Heart left ventricle (tissue), 16 donors: ENCODE measurements at regions of chr19 and their contacts with region 1.

Region 1: DNA sequence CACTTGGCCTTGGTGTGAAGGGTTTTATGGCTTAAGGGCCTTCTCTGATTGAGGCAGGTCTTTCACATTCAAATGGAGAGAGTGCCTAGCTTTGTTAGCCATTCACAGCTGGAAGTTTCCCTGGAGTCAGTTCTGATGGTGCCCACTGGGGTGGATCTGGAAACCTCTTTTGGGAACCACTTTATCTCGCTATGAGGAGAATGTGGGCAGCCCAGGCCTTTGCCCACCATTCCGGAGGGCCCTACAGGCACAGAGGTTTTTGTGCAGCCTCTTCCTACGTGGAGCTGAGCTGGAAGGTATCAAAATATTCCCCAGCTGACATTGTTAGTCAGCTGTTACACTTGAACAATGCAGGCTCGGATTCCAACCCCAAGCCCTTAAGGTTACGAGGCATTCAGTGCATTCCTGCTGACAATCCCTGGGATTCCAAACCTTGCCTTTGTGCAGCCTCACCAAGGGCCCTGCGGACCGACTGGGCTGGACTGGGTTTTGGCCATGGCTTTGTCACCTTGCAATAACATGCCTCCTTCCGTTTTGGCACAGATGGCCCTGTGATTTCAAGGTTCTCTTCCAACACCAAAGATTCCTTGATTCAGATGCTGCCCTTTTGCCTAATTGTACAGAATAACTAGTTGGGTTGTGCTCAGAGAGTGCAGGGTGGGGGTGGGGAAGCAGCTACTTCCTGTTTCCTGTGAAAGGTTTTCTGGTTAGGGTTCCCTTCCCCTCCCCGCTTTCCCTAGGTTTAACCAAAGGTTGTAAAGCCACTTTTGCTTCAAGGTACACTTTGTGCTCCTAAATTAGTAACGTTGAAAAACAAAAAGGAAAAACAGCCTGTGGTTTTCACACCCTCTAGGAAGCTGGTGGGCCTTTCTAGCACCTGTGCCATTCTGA is 27.0 kb downstream of the SAE1 start:
- DNase-seq: peak; percentile 59 to 73 (median 66)
- ATAC-seq: peak; percentile 54 to 79 (median 74)
- H3K4me3 ChIP-seq: peak overlapping the region in 4 of 12 donors; percentile 1 to 29 (median 5)
- H3K27ac ChIP-seq: peak overlapping the region; percentile 67 to 92 (median 86)
- H3K4me1 ChIP-seq: peaks cover 20 to 59% (median 43%) of the 10 kb centered on the region in 12 donors
- H3K27me3 ChIP-seq: no peaks in the 10 kb centered on the region
- CTCF ChIP-seq: peak in 1 of 12 donors; percentile 18
- POLR2A ChIP-seq: no peak

Region 2: DNA sequence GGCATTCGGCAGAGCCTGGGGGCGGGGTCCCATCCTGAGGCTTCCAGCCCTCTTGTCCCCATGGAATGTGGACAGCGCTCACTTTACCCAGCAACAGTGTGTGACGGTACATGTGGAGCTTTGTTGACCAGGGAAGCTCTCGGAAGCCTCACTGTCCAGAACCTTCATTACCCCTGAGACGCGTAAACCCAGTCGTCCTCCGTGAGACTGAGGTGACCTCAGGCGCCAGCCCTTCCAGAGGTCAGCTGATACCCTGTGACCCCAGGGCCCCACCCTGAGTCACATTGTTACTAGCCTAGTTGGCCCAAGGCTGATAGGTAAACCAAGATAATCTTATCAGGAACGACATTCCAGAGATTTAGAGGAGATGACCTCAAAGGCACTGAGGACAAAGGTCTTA is 99.1 kb before region 1 on chr19:
- intact Hi-C with region 1: no loop called
- DNase-seq: peak in 1 of 5 donors; percentile 4
- ATAC-seq: no peak
- H3K4me3 ChIP-seq: no peak overlapping the region
- H3K27ac ChIP-seq: no peak overlapping the region
- H3K4me1 ChIP-seq: no peaks in the 10 kb centered on the region
- H3K27me3 ChIP-seq: no peaks in the 10 kb centered on the region
- CTCF ChIP-seq: no peak
- POLR2A ChIP-seq: no peak

Region 3: GRCh38 chr19:47190167-47190727 is 32.6 kb after region 1 on chr19:
- intact Hi-C with region 1: loop called in 2 of 10 experiments (anchors 5 kb)
- DNase-seq: peak in 4 of 5 donors; percentile 26 to 58 (median 38)
- ATAC-seq: peak in 3 of 4 donors; percentile 46 to 72 (median 50)
- H3K4me3 ChIP-seq: peak overlapping the region in 2 of 12 donors; percentile 5 to 10
- H3K27ac ChIP-seq: peak overlapping the region; percentile 15 to 76 (median 62)
- H3K4me1 ChIP-seq: peaks cover 0 to 36% (median 16%) of the 10 kb centered on the region in 12 donors
- H3K27me3 ChIP-seq: no peaks in the 10 kb centered on the region
- CTCF ChIP-seq: no peak
- POLR2A ChIP-seq: no peak

Region 4: DNA sequence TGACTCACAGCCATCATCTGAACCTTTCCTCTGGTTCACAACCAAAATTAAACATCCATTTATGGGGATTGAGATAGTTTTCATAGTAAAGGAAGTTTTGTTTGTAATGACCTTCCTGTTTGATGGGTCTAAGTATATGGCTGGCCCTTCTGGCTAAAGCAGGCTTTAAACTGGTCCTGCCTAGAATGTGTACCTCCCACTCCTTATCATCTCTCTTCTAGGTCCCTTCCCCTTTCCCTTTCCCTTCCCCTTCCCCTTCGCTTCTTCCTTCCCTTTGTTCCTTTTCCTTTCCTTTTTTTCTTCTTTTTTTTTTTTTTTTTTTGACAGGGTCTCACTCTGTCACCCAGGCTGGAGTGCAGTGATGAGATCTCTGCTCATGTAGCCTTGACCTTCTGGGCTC is 37.8 kb after region 1 on chr19:
- intact Hi-C with region 1: loop called in 4 of 10 experiments (anchors 5 to 10 kb)
- DNase-seq: no peak
- ATAC-seq: no peak
- H3K4me3 ChIP-seq: no peak overlapping the region
- H3K27ac ChIP-seq: no peak overlapping the region
- H3K4me1 ChIP-seq: peaks cover 0 to 11% (median 6%) of the 10 kb centered on the region in 12 donors
- H3K27me3 ChIP-seq: no peaks in the 10 kb centered on the region
- CTCF ChIP-seq: no peak
- POLR2A ChIP-seq: no peak

Region 5: GRCh38 chr19:47210689-47211316 is 53.1 kb after region 1 on chr19:
- intact Hi-C with region 1: loop called in 8 of 10 experiments (anchors 5 to 10 kb)
- DNase-seq: peak; percentile 65 to 81 (median 75)
- ATAC-seq: peak; percentile 30 to 72 (median 64)
- H3K4me3 ChIP-seq: no peak overlapping the region
- H3K27ac ChIP-seq: peak overlapping the region in 11 of 12 donors; percentile 24 to 72 (median 53)
- H3K4me1 ChIP-seq: peaks cover 0 to 24% (median 10%) of the 10 kb centered on the region in 12 donors
- H3K27me3 ChIP-seq: no peaks in the 10 kb centered on the region
- CTCF ChIP-seq: peak; percentile 68 to 91 (median 82)
- POLR2A ChIP-seq: no peak

Region 6: GRCh38 chr19:47225746-47226425 is 68.2 kb after region 1 on chr19:
- intact Hi-C with region 1: loop called in 1 of 10 experiments (anchors 5 kb)
- DNase-seq: peak; percentile 89 to 94 (median 92)
- ATAC-seq: peak; percentile 19 to 78 (median 68)
- H3K4me3 ChIP-seq: peak overlapping the region; percentile 38 to 99 (median 88)
- H3K27ac ChIP-seq: peak overlapping the region; percentile 97 to 100 (median 100)
- H3K4me1 ChIP-seq: peaks cover 0 to 53% (median 31%) of the 10 kb centered on the region in 12 donors
- H3K27me3 ChIP-seq: no peaks in the 10 kb centered on the region
- CTCF ChIP-seq: peak in 9 of 12 donors; percentile 33 to 68 (median 54)
- POLR2A ChIP-seq: peak; percentile 99 to 100

Region 7: GRCh38 chr19:47398707-47399597 is 241.3 kb after region 1 on chr19:
- intact Hi-C with region 1: no loop called
- DNase-seq: no peak
- ATAC-seq: no peak
- H3K4me3 ChIP-seq: no peak overlapping the region
- H3K27ac ChIP-seq: no peak overlapping the region
- H3K4me1 ChIP-seq: no peaks in the 10 kb centered on the region
- H3K27me3 ChIP-seq: peaks cover 0 to 13% (median 0%) of the 10 kb centered on the region in 9 donors
- CTCF ChIP-seq: no peak
- POLR2A ChIP-seq: no peak